ENCODE measurements at regions of chr7 and their contacts with region 1.

Region 1: GRCh38 chr7:116525913-116526861 is 1.4 kb downstream of the CAV1 start:
- DNase-seq: peak; percentile 86 to 91 (median 88)
- ATAC-seq: peak; percentile 68 to 88 (median 82)
- H3K4me3 ChIP-seq: peak overlapping the region; percentile 70 to 92 (median 86)
- H3K27ac ChIP-seq: peak overlapping the region; percentile 91 to 99 (median 98)
- H3K4me1 ChIP-seq: peaks cover 5 to 59% (median 43%) of the 10 kb centered on the region in 12 donors
- H3K27me3 ChIP-seq: peaks cover 0 to 24% (median 0%) of the 10 kb centered on the region in 9 donors
- CTCF ChIP-seq: peak; percentile 55 to 99 (median 92)
- POLR2A ChIP-seq: peak in 1 of 2 donors; percentile 71

Region 2: DNA sequence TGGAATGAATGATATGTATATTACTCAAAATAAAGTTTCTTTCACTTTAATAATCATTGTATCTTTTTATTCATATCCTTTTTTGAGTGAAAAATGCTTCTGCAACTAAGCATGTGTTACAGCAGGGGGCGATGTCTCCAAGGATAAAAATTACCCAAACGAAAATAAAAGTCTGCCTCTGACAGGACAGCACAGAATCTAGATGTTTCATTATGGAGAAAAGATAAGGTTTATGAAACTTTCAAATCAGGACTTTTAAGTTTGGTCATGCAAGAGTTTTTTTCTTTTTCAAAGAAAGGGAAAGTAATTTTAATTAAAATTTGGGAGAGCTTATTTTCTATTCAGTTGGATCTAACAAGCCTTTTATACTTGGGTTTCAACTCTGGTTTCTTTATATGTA is 267.5 kb before region 1 on chr7:
- intact Hi-C with region 1: loop called (anchors 2 to 10 kb)
- DNase-seq: peak in 1 of 5 donors; percentile 27
- ATAC-seq: peak in 3 of 4 donors; percentile 36 to 69 (median 69)
- H3K4me3 ChIP-seq: no peak overlapping the region
- H3K27ac ChIP-seq: peak overlapping the region in 3 of 12 donors; percentile 6 to 49 (median 32)
- H3K4me1 ChIP-seq: peaks cover 0 to 9% (median 6%) of the 10 kb centered on the region in 12 donors
- H3K27me3 ChIP-seq: no peaks in the 10 kb centered on the region
- CTCF ChIP-seq: peak; percentile 56 to 93 (median 84)
- POLR2A ChIP-seq: no peak

Region 3: GRCh38 chr7:116354546-116355408 is 171.4 kb before region 1 on chr7:
- intact Hi-C with region 1: loop called in 9 of 10 experiments (anchors 1 to 10 kb)
- DNase-seq: peak; percentile 81 to 83 (median 83)
- ATAC-seq: peak; percentile 78 to 89 (median 82)
- H3K4me3 ChIP-seq: peak overlapping the region in 9 of 12 donors; percentile 4 to 40 (median 28)
- H3K27ac ChIP-seq: peak overlapping the region; percentile 78 to 95 (median 86)
- H3K4me1 ChIP-seq: peaks cover 3 to 68% (median 54%) of the 10 kb centered on the region in 12 donors
- H3K27me3 ChIP-seq: no peaks in the 10 kb centered on the region
- CTCF ChIP-seq: peak in 1 of 12 donors; percentile 1
- POLR2A ChIP-seq: peak in 1 of 2 donors; percentile 18

Region 4: DNA sequence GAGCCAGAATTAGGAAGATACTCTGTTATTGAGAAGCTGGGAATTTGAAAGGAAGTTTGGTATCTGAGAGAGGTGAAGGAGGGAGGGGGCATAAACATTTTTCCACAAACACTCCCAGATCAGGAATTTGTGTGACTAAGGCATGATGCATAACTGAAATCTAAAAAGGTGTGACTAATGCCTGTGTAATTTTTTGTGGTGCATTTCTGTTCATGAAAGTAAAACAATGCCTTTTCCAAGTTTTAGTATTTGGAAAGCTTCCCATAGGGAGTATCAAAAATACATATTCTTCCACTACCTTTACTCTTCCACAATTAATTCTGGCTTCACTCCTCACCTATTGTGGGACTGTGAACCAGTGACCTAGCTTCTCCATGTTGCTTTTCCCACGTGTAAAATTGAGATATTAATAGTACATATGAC is 83.1 kb before region 1 on chr7:
- intact Hi-C with region 1: loop called in 5 of 10 experiments (anchors 2 to 10 kb)
- DNase-seq: no peak
- ATAC-seq: peak in 2 of 4 donors; percentile 27 to 40
- H3K4me3 ChIP-seq: no peak overlapping the region
- H3K27ac ChIP-seq: peak overlapping the region in 5 of 12 donors; percentile 3 to 81 (median 59)
- H3K4me1 ChIP-seq: peaks cover 3 to 63% (median 40%) of the 10 kb centered on the region in 12 donors
- H3K27me3 ChIP-seq: no peaks in the 10 kb centered on the region
- CTCF ChIP-seq: no peak
- POLR2A ChIP-seq: no peak

Region 5: DNA sequence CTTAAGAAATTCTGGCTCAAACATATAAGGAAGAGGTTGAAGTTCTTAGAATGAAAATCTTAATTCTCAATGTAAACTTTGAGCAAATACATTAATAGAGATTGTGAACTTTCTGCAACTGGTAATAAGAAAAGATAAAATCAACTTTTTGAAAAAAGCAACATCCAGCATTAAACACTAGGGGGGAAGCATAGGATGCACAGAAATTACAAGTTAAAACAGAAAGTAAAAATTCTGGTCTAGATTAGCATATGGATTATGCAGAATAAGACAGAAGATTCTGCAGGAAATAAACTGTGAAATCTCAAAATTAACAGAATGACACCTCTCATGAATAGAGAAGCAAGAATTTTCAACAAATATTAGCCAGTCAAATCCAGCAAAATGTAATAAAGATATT is 64.7 kb before region 1 on chr7:
- intact Hi-C with region 1: no loop called
- DNase-seq: no peak
- ATAC-seq: no peak
- H3K4me3 ChIP-seq: no peak overlapping the region
- H3K27ac ChIP-seq: no peak overlapping the region
- H3K4me1 ChIP-seq: peaks cover 0 to 19% (median 7%) of the 10 kb centered on the region in 12 donors
- H3K27me3 ChIP-seq: no peaks in the 10 kb centered on the region
- CTCF ChIP-seq: no peak
- POLR2A ChIP-seq: no peak

Region 6: DNA sequence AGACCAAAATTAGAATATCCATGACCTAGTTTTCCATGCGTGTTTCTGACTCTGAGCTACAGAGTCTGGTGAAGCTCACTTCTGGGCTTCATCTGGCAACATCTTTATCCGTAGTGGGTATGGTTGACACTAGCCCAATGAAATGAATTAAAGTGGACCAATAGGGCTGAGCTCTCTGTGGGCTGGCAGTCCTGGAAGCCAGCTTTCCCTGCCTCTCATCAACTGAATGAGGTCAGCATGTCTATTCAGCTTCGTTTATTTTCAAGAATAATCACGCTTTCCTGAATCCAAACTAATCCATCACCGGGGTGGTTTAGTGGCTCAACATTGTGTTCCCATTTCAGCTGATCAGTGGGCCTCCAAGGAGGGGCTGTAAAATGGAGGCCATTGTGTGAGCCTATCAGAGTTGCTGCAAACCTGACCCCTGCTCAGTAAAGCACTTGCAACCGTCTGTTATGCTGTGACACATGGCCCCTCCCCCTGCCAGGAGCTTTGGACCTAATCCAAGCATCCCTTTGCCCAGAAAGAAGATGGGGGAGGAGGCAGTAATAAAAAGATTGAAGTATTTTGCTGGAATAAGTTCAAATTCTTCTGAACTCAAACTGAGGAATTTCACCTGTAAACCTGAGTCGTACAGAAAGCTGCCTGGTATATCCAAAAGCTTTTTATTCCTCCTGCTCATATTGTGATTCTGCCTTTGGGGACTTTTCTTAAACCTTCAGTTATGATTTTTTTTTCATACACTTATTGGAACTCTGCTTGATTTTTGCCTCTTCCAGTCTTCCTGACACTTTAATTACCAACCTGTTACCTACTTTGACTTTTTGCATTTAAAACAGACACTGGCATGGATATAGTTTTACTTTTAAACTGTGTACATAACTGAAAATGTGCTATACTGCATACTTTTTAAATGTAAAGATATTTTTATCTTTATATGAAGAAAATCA is 34.1 kb after region 1 on chr7:
- intact Hi-C with region 1: loop called in 1 of 10 experiments (anchors 1 kb)
- DNase-seq: peak in 2 of 5 donors; percentile 20 to 43
- ATAC-seq: peak; percentile 79 to 93 (median 88)
- H3K4me3 ChIP-seq: no peak overlapping the region
- H3K27ac ChIP-seq: peak overlapping the region; percentile 55 to 82 (median 71)
- H3K4me1 ChIP-seq: peaks cover 4 to 63% (median 40%) of the 10 kb centered on the region in 12 donors
- H3K27me3 ChIP-seq: no peaks in the 10 kb centered on the region
- CTCF ChIP-seq: no peak
- POLR2A ChIP-seq: no peak

Region 7: GRCh38 chr7:116582806-116583444 is 56.7 kb after region 1 on chr7:
- intact Hi-C with region 1: loop called (anchors 2 to 10 kb)
- DNase-seq: peak in 4 of 5 donors; percentile 62 to 74 (median 66)
- ATAC-seq: peak; percentile 75 to 90 (median 89)
- H3K4me3 ChIP-seq: peak overlapping the region in 5 of 12 donors; percentile 4 to 36 (median 10)
- H3K27ac ChIP-seq: peak overlapping the region; percentile 15 to 78 (median 62)
- H3K4me1 ChIP-seq: peaks cover 0 to 41% (median 23%) of the 10 kb centered on the region in 12 donors
- H3K27me3 ChIP-seq: no peaks in the 10 kb centered on the region
- CTCF ChIP-seq: no peak
- POLR2A ChIP-seq: no peak

Region 8: DNA sequence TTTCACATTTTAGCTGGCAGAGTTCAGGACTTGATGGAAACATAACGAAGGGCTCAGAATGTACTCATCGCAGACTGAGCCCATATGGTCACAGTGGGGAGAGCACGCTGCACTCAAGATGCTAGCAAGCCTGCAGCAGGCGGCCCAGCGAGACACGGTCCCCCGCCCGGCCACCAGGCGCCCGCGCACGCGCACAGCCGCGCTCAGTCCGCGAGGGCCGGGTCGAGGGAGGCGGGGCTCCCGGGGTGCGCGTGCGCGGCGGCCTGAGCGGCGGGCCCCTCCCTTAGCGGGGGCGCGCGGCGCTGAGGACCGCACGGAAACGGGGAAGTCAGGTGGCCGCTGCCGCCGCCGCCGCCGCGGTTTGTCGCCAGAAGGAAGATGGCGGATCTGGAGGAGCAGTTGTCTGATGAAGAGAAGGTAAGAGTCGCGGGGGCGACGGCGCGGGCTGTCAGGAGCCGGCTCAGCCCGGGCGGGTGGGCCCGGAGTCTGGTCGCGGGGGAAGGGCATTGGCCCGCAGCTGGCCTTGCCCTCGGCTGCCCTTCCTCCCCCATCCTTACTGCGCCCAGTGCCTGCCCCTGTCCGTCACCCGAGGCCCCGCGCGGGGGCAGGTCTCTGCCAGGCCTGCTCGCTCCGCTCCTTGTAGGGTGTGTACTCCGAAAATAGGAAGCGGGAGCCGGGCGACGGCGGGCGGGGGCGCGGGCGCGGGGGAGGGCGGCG is 336.2 kb after region 1 on chr7 and contains the start of gene CAPZA2:
- intact Hi-C with region 1: loop called in 1 of 10 experiments (anchors 5 kb)
- DNase-seq: peak; percentile 94 to 98 (median 95)
- ATAC-seq: peak; percentile 90 to 97 (median 95)
- H3K4me3 ChIP-seq: peak within 1 kb of the TSS; percentile 68 to 98 (median 92)
- H3K27ac ChIP-seq: peak within 1 kb of the TSS; percentile 97 to 100 (median 99)
- H3K4me1 ChIP-seq: peaks cover 0 to 44% (median 28%) of the 10 kb centered on the region in 12 donors
- H3K27me3 ChIP-seq: no peaks in the 10 kb centered on the region
- CTCF ChIP-seq: peak in 7 of 12 donors; percentile 21 to 59 (median 37)
- POLR2A ChIP-seq: peak in 1 of 2 donors; percentile 79
- total RNA-seq, gene CAPZA2: 114 to 483 (median 332) TPM

Measured in heart left ventricle (tissue), 16 donors.